A673 (cell line): ENCODE measurements at regions of chr20 and their contacts with region 1.

Region 1: DNA sequence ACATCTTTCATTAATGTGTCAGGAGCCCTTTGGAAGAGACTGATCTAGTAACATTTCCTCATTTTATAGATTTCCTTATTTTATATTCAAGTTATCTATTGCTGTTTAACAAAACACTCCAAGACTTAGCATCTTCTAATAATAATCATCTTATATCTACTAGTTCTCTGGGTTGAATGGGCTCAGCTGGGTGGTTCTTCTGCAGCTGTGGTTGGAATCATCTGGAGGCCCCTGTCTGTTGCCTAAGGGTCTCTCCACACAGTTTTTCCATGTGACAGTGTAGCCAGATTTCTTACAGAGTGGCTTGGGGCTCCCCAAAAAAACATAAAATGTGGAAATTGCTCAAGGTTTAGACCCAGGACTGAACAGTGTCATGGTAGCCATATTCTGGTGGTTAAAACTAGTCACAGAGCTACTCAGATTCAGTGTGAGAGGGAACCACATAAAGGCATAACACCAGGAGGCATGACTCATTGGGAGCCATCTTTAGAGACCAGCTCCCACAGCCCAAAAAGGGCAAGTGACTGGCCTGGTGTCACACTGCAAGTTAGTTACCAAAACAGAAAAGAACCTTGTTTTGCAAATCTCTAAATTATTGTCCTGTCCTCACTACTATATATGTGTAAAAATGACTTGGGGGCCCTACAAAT is 11.5 kb downstream of the SLC2A10 start:
- DNase-seq: no peak
- H3K4me3 ChIP-seq: no peak overlapping the region
- H3K27ac ChIP-seq: no peak overlapping the region
- H3K4me1 ChIP-seq: no peaks in the 10 kb centered on the region
- H3K27me3 ChIP-seq: peaks cover 2% of the 10 kb centered on the region
- CTCF ChIP-seq: no peak

Region 2: DNA sequence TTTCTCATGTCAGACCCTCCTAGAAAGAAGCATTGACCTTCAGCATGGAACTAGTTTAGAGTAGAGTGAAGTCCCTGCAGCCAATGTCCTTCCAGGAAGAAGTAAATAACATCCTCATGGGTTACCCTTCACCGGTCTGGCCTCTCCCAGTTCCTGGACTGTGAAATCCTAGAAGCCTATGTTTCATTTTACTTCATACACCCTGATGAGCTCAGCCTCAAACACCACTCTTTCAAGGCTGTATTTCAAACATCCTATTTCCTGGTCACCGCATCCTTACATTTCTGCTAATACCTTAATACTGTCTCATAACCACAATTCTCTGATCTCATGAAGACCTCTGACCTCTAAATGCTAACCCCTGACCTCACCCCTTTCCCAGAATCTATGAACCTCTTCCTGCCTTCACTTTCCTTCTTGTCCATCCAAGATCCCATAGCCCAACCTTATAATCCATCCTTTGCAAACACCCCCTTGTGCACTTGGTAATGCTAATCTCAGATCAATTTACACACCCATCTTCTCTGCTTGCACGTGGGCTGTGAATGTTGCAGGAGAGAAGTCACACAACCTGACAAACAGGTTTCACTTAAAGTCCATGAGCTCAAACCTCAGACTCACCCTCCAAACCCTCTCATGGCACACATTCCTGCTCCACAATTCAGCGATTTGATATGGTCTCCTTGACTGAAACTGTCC is 18.7 kb after region 1 on chr20:
- CTCF ChIA-PET with region 1: no interaction called
- POLR2A ChIA-PET with region 1: no interaction called
- intact Hi-C with region 1: no loop called
- DNase-seq: no peak
- H3K4me3 ChIP-seq: no peak overlapping the region
- H3K27ac ChIP-seq: no peak overlapping the region
- H3K4me1 ChIP-seq: no peaks in the 10 kb centered on the region
- H3K27me3 ChIP-seq: peaks cover 21% of the 10 kb centered on the region
- CTCF ChIP-seq: no peak

Region 3: GRCh38 chr20:47232518-47232917 is 511.6 kb after region 1 on chr20:
- CTCF ChIA-PET with region 1: no interaction called
- POLR2A ChIA-PET with region 1: interaction called, 16 read pairs
- intact Hi-C with region 1: no loop called
- DNase-seq: no peak
- H3K4me3 ChIP-seq: no peak overlapping the region
- H3K27ac ChIP-seq: no peak overlapping the region
- H3K4me1 ChIP-seq: no peaks in the 10 kb centered on the region
- H3K27me3 ChIP-seq: no peaks in the 10 kb centered on the region
- CTCF ChIP-seq: no peak